CD14-positive monocyte (primary cell): ENCODE measurements at regions of chr1 and their contacts with region 1.

Region 1: DNA sequence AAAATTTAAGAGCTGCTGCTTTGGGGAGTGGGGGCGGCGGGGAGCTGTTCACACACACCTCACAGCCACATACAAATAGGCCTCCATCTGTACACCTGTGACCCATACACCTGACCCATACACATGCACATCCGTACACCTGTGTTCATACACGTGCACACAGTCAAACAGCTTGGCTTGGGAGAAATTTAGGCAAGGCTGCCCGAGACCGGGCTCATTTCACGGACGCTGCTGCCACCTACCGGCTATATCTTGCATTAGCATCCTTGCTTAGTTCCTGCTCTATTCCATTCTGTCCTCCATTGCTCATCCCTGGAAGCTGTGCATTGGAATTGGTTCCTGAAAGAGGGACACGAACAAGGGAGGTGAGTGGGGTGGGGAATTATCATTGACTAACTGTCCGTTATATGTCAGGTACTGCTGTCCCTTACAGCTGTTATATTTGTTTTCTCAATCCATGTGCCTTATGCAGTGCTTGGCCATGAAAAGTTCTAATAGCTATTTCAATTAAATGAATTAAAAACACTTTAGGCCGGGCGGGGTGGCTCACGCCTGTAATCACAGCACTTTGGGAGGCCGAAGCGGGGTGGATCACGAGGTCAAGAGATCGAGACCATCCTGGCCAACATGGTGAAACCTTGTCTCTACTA is 37.1 kb upstream of the EPB41 start:
- DNase-seq: peak; percentile 64 to 80 (median 74)
- H3K4me3 ChIP-seq: no peak overlapping the region
- H3K4me3 Mint-ChIP-seq: no peak overlapping the region
- H3K27ac ChIP-seq: no peak overlapping the region
- H3K27ac Mint-ChIP-seq: peak overlapping the region in 1 of 7 donors; percentile 22
- H3K4me1 ChIP-seq: peaks cover 14 to 17% of the 10 kb centered on the region in 2 donors
- H3K4me1 Mint-ChIP-seq: peaks cover 19% of the 10 kb centered on the region
- H3K27me3 ChIP-seq: no peaks in the 10 kb centered on the region
- H3K27me3 Mint-ChIP-seq: peaks cover 2 to 5% (median 3%) of the 10 kb centered on the region in 3 donors
- CTCF ChIP-seq: peak; percentile 94

Region 2: GRCh38 chr1:28518000-28518744 is 359.1 kb before region 1 on chr1:
- intact Hi-C with region 1: loop called (anchors 1 to 5 kb)
- DNase-seq: peak; percentile 80 to 87 (median 81)
- H3K4me3 ChIP-seq: peak overlapping the region; percentile 57 to 88 (median 60)
- H3K4me3 Mint-ChIP-seq: peak overlapping the region; percentile 88 to 89
- H3K27ac ChIP-seq: peak overlapping the region; percentile 16 to 59
- H3K27ac Mint-ChIP-seq: peak overlapping the region; percentile 78 to 94 (median 86)
- H3K4me1 ChIP-seq: peaks cover 15 to 17% of the 10 kb centered on the region in 2 donors
- H3K4me1 Mint-ChIP-seq: peaks cover 23% of the 10 kb centered on the region
- H3K27me3 ChIP-seq: no peaks in the 10 kb centered on the region
- H3K27me3 Mint-ChIP-seq: peaks cover 0 to 2% (median 2%) of the 10 kb centered on the region in 3 donors
- CTCF ChIP-seq: peak; percentile 100

Region 3: DNA sequence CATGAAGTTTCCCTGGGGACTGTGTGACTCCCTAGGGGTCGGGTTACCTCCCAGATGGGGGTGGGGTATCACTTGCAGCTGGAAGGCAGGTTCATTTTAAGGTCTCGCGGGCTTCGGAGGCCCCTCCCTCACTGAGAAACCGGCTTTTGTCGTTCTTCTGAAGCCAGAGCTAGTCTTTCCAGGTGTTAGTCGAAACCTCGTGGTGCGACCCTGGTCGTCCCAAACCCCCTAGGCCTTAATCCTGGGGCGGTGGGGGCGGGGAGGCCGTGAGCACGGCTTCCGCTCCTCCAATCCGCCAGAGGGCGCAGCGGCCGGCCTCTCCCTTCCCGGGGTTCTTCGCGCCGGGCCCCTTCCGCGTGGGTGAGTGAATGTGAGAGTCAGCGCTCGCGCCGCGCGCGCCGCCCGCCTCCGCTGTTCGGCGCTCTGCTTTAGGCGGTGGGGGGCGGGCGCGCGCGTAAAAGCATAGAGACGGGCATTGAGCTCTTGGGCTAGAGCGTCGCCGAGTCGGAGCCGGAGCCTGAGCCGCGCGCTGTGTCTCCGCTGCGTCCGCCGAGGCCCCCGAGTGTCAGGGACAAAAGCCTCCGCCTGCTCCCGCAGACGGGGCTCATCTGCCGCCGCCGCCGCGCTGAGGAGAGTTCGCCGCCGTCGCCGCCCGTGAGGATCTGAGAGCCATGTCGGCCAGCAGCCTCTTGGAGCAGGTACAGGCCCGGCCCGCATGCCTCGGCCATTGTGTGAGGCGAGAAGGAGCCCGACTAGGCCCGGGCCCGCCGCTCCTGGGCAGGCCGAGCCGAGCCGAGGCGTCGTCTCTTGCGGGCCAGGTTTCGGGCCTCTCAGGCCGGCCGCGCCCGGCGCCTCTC is 140.6 kb before region 1 on chr1 and contains the start of gene YTHDF2:
- intact Hi-C with region 1: loop called in 1 of 2 experiments (anchors 5 kb)
- DNase-seq: peak; percentile 95 to 96 (median 95)
- H3K4me3 ChIP-seq: peak within 1 kb of the TSS; percentile 73 to 95 (median 78)
- H3K4me3 Mint-ChIP-seq: peak within 1 kb of the TSS; percentile 86 to 99
- H3K27ac ChIP-seq: peak within 1 kb of the TSS; percentile 74 to 91
- H3K27ac Mint-ChIP-seq: peak within 1 kb of the TSS; percentile 91 to 97 (median 95)
- H3K4me1 ChIP-seq: peaks cover 20 to 38% of the 10 kb centered on the region in 2 donors
- H3K4me1 Mint-ChIP-seq: peaks cover 27% of the 10 kb centered on the region
- H3K27me3 ChIP-seq: no peaks in the 10 kb centered on the region
- H3K27me3 Mint-ChIP-seq: peaks cover 0 to 2% (median 0%) of the 10 kb centered on the region in 3 donors
- CTCF ChIP-seq: peak; percentile 99
- polyA plus RNA-seq, gene YTHDF2: 20.7 to 81.6 (median 74.2) TPM

Region 4: GRCh38 chr1:28789412-28789811 is 87.8 kb before region 1 on chr1:
- intact Hi-C with region 1: loop called (anchors 2 to 5 kb)
- DNase-seq: no peak
- H3K4me3 ChIP-seq: no peak overlapping the region
- H3K4me3 Mint-ChIP-seq: no peak overlapping the region
- H3K27ac ChIP-seq: no peak overlapping the region
- H3K27ac Mint-ChIP-seq: peak overlapping the region in 3 of 7 donors; percentile 11 to 50 (median 26)
- H3K4me1 ChIP-seq: peaks cover 6 to 7% of the 10 kb centered on the region in 2 donors
- H3K4me1 Mint-ChIP-seq: peaks cover 9% of the 10 kb centered on the region
- H3K27me3 ChIP-seq: no peaks in the 10 kb centered on the region
- H3K27me3 Mint-ChIP-seq: peaks cover 2 to 6% (median 4%) of the 10 kb centered on the region in 3 donors
- CTCF ChIP-seq: no peak